Cardiac septum (tissue), 1 donor: ENCODE measurements at regions of chr1 and their contacts with region 1.

Region 1: GRCh38 chr1:94296018-94296417 is 58.6 kb upstream of the ARHGAP29 start:
- DNase-seq: no peak

Region 2: DNA sequence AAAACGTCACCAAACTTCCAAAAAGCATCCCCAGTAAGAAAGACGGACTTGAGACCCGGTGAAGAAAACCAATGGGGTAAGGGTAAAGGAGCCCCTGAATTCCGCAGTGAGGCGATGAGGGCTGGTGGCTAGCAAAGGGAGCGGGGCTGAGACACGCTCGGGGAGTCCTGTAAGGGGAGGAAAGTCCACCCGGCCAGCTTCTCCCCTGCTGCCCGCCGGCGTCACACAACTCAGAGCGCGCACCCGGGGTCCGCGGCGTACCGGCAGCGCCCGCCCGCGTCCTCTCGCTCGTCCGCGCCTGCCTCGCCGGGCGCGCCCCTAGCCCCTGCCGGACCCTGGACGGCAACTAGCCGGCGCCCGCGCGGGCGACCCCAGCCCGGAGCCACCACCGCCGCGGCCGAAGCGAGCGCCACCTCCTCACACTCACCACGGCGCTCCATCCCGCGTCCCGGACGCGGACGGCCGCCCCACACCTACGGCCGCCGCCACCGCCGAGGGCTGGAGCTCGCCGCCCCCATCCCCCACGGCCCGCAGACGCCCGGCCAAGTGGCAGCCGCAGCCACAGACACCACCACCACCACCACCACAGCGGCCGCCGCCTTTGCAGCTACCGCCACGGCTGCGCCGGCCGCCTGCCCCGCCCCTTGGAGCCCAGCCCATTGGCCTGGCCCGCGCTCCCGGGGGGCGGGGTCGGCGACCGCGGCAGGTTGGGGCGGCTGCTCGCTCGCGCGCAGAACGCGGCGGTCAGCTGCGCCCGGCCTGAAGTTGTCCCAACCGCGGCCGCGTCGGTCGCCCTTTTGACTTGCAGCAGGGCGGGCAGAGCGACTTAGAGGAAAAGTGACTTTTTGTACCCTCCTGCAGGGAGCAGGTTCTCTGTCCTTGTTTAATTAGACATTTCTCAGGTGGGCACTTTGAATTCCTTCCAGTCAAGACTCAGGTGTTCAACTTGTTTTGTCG is 48.6 kb before region 1 on chr1:
- intact Hi-C with region 1: loop called (anchors 1 kb)
- DNase-seq: peak; percentile 93

Region 3: GRCh38 chr1:94329986-94330385 is 34.0 kb after region 1 on chr1:
- intact Hi-C with region 1: loop called (anchors 2 kb)
- DNase-seq: no peak